ENCODE measurements at regions of chr14 and their contacts with region 1.

Region 1: GRCh38 chr14:92709340-92710000 is 39.0 kb downstream of the LGMN start:
- DNase-seq: peak in 1 of 2 donors; percentile 43
- ATAC-seq: no peak
- H3K4me3 ChIP-seq: no peak overlapping the region
- H3K27ac ChIP-seq: no peak overlapping the region
- H3K4me1 ChIP-seq: no peaks in the 10 kb centered on the region
- H3K27me3 ChIP-seq: no peaks in the 10 kb centered on the region

Region 2: DNA sequence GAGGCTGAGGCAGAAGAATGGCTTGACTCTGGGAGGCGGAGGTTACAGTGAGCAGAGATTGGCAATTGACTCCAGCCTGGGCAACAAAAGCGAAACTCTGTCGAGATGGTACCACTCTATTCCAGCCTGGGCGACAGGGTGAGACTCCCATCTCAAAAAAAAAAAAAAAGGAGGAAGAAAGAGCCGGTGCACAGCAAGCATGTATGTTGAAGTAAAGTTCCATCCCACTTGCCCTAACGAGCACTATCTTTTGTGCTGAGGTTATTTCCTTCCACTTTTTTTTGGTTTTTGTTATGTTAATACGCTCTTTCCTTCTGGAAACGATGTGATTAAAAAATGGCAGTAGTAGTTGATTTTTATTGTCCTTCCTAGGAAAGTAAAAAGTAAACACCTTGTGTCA is 65.1 kb after region 1 on chr14:
- intact Hi-C with region 1: loop called in 1 of 2 experiments (anchors 2 kb)
- DNase-seq: no peak
- ATAC-seq: no peak
- H3K4me3 ChIP-seq: no peak overlapping the region
- H3K27ac ChIP-seq: no peak overlapping the region
- H3K4me1 ChIP-seq: no peaks in the 10 kb centered on the region
- H3K27me3 ChIP-seq: no peaks in the 10 kb centered on the region